ENCODE measurements at regions of chr20 and their contacts with region 1.

Region 1: DNA sequence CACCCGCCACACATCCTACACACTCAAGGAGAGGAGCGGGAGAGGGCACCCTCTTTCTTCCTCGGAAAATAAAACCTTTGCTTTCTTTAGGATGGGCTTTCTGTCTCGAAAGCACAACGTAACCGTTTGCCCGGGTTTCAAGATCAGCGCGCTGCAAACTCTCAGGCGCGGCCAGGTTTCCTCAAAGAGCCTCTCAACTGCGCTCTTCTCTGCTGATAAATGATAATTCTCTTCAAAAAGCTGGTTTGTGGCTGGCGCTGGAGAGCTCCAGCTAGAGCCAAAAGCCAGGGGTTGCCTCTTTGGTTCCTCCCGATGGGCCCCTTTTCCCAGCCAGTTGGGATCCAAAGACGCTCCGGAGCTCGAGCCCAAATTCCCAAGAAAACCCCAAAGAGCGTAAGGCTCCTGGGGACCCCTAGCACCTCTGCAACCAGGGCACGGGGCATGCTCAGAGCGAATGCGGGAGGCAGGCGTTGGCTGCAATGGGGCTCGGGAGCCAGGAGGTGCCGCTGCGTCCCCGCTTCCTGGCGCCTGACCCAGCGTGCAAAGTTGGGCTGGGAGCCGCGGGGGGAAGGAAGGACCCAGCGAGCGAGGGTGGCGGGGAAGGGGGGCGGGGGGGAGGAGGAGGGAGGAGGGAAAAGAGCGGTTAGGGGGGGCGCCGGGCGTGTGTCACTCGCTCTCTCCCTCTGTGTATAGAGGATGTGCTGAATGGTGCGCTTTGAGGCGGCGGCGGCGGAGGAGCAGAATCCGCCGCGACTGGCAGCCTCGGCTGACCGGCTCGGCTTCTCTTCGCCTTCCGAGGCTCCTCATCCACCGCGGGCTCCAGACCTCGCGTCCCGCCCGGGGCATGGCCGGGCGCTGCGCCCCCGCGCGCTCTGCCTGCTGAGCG is at the start of gene PLCB1:
- DNase-seq: peak; percentile 87 to 94
- H3K4me3 ChIP-seq: peak within 1 kb of the TSS; percentile 76
- H3K4me3 Mint-ChIP-seq: peak within 1 kb of the TSS; percentile 84
- H3K27ac Mint-ChIP-seq: peak within 1 kb of the TSS; percentile 93
- H3K4me1 ChIP-seq: peaks cover 53% of the 10 kb centered on the region
- H3K4me1 Mint-ChIP-seq: peaks cover 50% of the 10 kb centered on the region
- H3K27me3 ChIP-seq: no peaks in the 10 kb centered on the region
- H3K27me3 Mint-ChIP-seq: no peaks in the 10 kb centered on the region
- CTCF ChIP-seq: peak; percentile 90 to 96
- total RNA-seq, gene PLCB1: 101 and 105 TPM in 2 replicates

Region 2: GRCh38 chr20:8082025-8082424 is 49.8 kb before region 1 on chr20:
- CTCF ChIA-PET with region 1: no interaction called
- POLR2A ChIA-PET with region 1: no interaction called
- intact Hi-C with region 1: loop called (anchors 2 kb)
- DNase-seq: peak; percentile 46 to 54
- H3K4me3 ChIP-seq: no peak overlapping the region
- H3K4me3 Mint-ChIP-seq: no peak overlapping the region
- H3K27ac Mint-ChIP-seq: no peak overlapping the region
- H3K4me1 ChIP-seq: peaks cover 37% of the 10 kb centered on the region
- H3K4me1 Mint-ChIP-seq: peaks cover 23% of the 10 kb centered on the region
- H3K27me3 ChIP-seq: no peaks in the 10 kb centered on the region
- H3K27me3 Mint-ChIP-seq: no peaks in the 10 kb centered on the region
- CTCF ChIP-seq: peak; percentile 50 to 56

Region 3: DNA sequence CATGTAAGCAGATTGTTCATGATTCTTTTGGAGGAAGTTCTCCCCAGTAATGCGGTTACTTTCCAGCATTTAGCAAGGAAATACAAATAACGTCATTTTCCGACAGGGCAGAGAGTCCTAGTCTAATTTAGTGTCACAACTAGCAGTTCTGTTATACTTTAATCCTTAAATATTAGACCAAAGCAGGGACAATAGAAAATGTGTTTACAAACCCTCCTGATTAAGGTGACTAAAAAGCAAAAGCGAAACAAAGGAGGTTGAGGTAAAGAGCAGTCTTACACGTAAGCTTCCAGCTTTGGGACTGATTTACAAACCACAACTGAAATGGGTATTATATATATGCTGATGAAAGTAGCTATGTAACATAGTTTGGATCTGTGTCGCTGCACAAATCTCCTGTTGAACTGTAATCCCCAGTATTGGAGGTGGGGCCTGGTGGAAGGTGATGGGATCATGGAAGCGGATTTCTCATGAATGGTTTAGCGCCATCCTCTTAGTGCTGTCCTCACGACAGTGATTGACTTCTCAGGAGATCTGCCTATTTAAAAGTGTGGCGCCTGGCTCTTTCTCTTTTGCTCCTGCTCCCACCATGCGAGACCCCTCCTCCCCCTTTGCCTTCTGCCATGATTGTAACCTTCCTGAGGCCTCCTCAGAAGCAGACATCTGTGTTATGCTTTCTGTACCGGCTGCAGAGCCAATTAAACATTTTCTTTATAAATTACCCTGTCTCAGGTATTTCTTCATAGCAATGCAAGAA is 82.2 kb after region 1 on chr20:
- CTCF ChIA-PET with region 1: no interaction called
- POLR2A ChIA-PET with region 1: no interaction called
- intact Hi-C with region 1: no loop called
- DNase-seq: no peak
- H3K4me3 ChIP-seq: no peak overlapping the region
- H3K4me3 Mint-ChIP-seq: no peak overlapping the region
- H3K27ac Mint-ChIP-seq: no peak overlapping the region
- H3K4me1 ChIP-seq: peaks cover 42% of the 10 kb centered on the region
- H3K4me1 Mint-ChIP-seq: peaks cover 51% of the 10 kb centered on the region
- H3K27me3 ChIP-seq: no peaks in the 10 kb centered on the region
- H3K27me3 Mint-ChIP-seq: no peaks in the 10 kb centered on the region
- CTCF ChIP-seq: no peak

Region 4: DNA sequence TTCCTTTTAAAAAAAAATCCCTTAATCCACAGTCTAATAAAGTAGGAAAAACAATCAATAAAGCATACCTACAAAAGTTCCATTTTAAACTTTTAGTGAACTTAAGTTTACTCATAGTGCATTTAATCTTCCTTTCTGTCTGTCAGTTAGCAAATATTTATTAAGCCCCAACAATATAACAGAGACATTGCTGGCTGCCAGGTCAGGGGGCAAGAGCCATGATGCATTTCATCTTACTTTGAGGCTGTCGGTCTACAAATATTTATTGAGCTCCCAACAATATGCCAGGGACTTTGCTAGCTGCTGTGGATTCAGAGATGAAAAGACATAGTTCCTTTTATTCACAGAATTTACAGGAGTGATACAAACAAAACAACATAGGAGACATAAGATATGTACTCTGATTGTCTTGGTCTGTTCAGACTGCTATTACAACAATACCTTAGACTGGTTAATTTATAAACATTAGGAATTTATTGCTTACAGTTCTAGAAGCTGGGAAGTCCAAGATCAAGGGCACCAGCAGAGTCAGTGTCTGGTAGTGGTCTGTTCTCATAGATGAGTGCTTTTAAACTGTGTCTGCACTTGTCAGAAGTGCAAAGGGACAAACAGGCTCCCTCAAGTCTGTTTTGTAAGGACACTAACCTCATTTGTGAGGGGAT is 118.8 kb after region 1 on chr20:
- CTCF ChIA-PET with region 1: interaction called, 3 read pairs
- POLR2A ChIA-PET with region 1: no interaction called
- intact Hi-C with region 1: loop called (anchors 1 kb)
- DNase-seq: peak; percentile 73 to 78
- H3K4me3 ChIP-seq: no peak overlapping the region
- H3K4me3 Mint-ChIP-seq: peak overlapping the region; percentile 25
- H3K27ac Mint-ChIP-seq: peak overlapping the region; percentile 31
- H3K4me1 ChIP-seq: peaks cover 31% of the 10 kb centered on the region
- H3K4me1 Mint-ChIP-seq: peaks cover 39% of the 10 kb centered on the region
- H3K27me3 ChIP-seq: no peaks in the 10 kb centered on the region
- H3K27me3 Mint-ChIP-seq: no peaks in the 10 kb centered on the region
- CTCF ChIP-seq: no peak

Region 5: GRCh38 chr20:8389381-8390036 is 257.7 kb after region 1 on chr20:
- CTCF ChIA-PET with region 1: interaction called, 4 read pairs
- POLR2A ChIA-PET with region 1: no interaction called
- intact Hi-C with region 1: loop called (anchors 1 kb)
- DNase-seq: peak in 1 of 2 experiments; percentile 27
- H3K4me3 ChIP-seq: no peak overlapping the region
- H3K4me3 Mint-ChIP-seq: no peak overlapping the region
- H3K27ac Mint-ChIP-seq: no peak overlapping the region
- H3K4me1 ChIP-seq: peaks cover 27% of the 10 kb centered on the region
- H3K4me1 Mint-ChIP-seq: no peaks in the 10 kb centered on the region
- H3K27me3 ChIP-seq: no peaks in the 10 kb centered on the region
- H3K27me3 Mint-ChIP-seq: no peaks in the 10 kb centered on the region
- CTCF ChIP-seq: peak; percentile 7 to 56

Region 6: GRCh38 chr20:8583566-8584043 is 451.8 kb after region 1 on chr20:
- CTCF ChIA-PET with region 1: no interaction called
- POLR2A ChIA-PET with region 1: no interaction called
- intact Hi-C with region 1: loop called (anchors 5 kb)
- DNase-seq: peak; percentile 66 to 70
- H3K4me3 ChIP-seq: peak overlapping the region; percentile 5; the same call in 1 of the 2 replicates
- H3K4me3 Mint-ChIP-seq: peak overlapping the region; percentile 38
- H3K27ac Mint-ChIP-seq: peak overlapping the region; percentile 71
- H3K4me1 ChIP-seq: peaks cover 17% of the 10 kb centered on the region
- H3K4me1 Mint-ChIP-seq: peaks cover 16% of the 10 kb centered on the region
- H3K27me3 ChIP-seq: no peaks in the 10 kb centered on the region
- H3K27me3 Mint-ChIP-seq: no peaks in the 10 kb centered on the region
- CTCF ChIP-seq: no peak

Measured in Caco-2 (cell line).